ENCODE measurements at regions of chr11 and their contacts with region 1.

Region 1: GRCh38 chr11:33065445-33066178 is 26.2 kb downstream of the TCP11L1 start:
- DNase-seq: peak; percentile 66 to 72 (median 67)
- H3K4me3 ChIP-seq: no peak overlapping the region
- H3K4me3 Mint-ChIP-seq: no peak overlapping the region
- H3K27ac ChIP-seq: no peak overlapping the region
- H3K27ac Mint-ChIP-seq: peak overlapping the region in 1 of 7 donors; percentile 64
- H3K4me1 ChIP-seq: peaks cover 5% of the 10 kb centered on the region
- H3K4me1 Mint-ChIP-seq: peaks cover 15 to 30% (median 25%) of the 10 kb centered on the region in 4 donors
- H3K27me3 ChIP-seq: no peaks in the 10 kb centered on the region
- H3K27me3 Mint-ChIP-seq: no peaks in the 10 kb centered on the region

Region 2: DNA sequence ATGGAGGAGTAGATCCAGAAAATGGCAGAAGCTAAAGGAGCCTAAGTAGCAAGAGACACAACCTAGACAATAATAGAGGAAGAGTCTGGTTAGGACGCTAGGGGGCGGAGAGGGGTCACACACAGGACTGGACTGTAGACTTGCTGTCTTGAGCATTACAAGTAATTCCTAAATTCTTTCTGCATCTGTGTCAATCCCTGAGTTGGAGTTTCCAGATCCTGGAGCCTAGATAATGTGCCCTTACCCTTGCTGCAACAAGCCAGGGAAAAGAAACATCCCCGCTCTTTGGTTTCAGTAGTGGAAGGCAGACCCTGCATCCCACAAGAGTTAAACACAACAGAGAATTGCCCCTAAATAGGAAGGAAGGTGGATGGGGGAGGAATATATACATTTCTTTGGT is 256.3 kb before region 1 on chr11:
- CTCF ChIA-PET with region 1: interaction called, 8 read pairs
- POLR2A ChIA-PET with region 1: no interaction called
- intact Hi-C with region 1: loop called (anchors 2 kb)
- DNase-seq: peak in 3 of 5 donors; percentile 7 to 13 (median 13)
- H3K4me3 ChIP-seq: no peak overlapping the region
- H3K4me3 Mint-ChIP-seq: no peak overlapping the region
- H3K27ac ChIP-seq: no peak overlapping the region
- H3K27ac Mint-ChIP-seq: no peak overlapping the region
- H3K4me1 ChIP-seq: no peaks in the 10 kb centered on the region
- H3K4me1 Mint-ChIP-seq: no peaks in the 10 kb centered on the region
- H3K27me3 ChIP-seq: no peaks in the 10 kb centered on the region
- H3K27me3 Mint-ChIP-seq: no peaks in the 10 kb centered on the region

Region 3: GRCh38 chr11:32960553-32961164 is 105.0 kb before region 1 on chr11:
- CTCF ChIA-PET with region 1: interaction called, 394 read pairs
- POLR2A ChIA-PET with region 1: interaction called, 8 read pairs
- intact Hi-C with region 1: loop called (anchors 1 kb)
- DNase-seq: peak in 4 of 5 donors; percentile 40 to 57 (median 54)
- H3K4me3 ChIP-seq: no peak overlapping the region
- H3K4me3 Mint-ChIP-seq: no peak overlapping the region
- H3K27ac ChIP-seq: no peak overlapping the region
- H3K27ac Mint-ChIP-seq: no peak overlapping the region
- H3K4me1 ChIP-seq: no peaks in the 10 kb centered on the region
- H3K4me1 Mint-ChIP-seq: peaks cover 0 to under 1% (median 0%) of the 10 kb centered on the region in 4 donors
- H3K27me3 ChIP-seq: no peaks in the 10 kb centered on the region
- H3K27me3 Mint-ChIP-seq: no peaks in the 10 kb centered on the region

Region 4: DNA sequence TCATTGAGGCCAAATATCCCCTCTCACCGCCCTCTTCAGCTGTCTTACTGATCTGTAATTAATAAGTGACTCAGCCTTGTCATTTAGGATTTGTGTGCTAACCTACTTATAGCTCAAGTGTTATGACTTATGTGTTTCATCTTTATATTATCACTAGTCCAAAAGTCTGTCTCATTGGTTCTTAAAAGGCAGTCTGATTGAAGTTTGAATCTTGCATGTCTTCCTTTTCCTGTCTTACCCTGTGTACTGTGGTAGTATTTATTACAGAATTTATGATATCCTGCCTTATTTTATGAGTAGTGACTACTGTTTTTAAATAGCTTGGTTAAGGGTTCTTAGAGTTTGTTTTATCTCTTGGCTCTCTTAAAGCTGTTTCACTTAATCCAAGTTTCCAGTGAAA is 43.7 kb before region 1 on chr11:
- CTCF ChIA-PET with region 1: interaction called, 10 read pairs
- POLR2A ChIA-PET with region 1: no interaction called
- intact Hi-C with region 1: no loop called
- DNase-seq: no peak
- H3K4me3 ChIP-seq: no peak overlapping the region
- H3K4me3 Mint-ChIP-seq: no peak overlapping the region
- H3K27ac ChIP-seq: no peak overlapping the region
- H3K27ac Mint-ChIP-seq: no peak overlapping the region
- H3K4me1 ChIP-seq: peaks cover 7% of the 10 kb centered on the region
- H3K4me1 Mint-ChIP-seq: peaks cover 2 to 17% (median 7%) of the 10 kb centered on the region in 4 donors
- H3K27me3 ChIP-seq: no peaks in the 10 kb centered on the region
- H3K27me3 Mint-ChIP-seq: peaks cover 8 to 15% of the 10 kb centered on the region in 2 donors

Region 5: DNA sequence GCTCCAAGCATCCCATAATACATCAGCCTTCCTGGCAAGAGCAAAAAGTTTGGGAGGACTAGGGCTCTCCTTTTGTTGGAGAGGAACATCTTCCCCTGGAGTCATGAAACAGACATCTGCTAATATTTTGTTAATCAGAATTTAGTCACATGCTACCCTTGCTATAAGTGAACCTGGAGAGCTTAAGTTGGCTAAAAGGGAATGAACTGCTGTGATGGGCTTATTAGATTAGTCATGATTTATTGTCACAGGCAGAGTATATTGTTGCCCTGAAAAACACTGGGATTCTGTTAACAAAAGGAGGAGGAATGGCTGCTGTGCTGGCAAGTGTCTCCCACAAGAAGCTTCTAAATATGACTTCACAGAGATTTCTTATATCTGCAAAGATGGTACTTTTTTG is 10.3 kb before region 1 on chr11:
- CTCF ChIA-PET with region 1: interaction called, 20 read pairs
- POLR2A ChIA-PET with region 1: interaction called, 3 read pairs
- intact Hi-C with region 1: no loop called
- DNase-seq: no peak
- H3K4me3 ChIP-seq: no peak overlapping the region
- H3K4me3 Mint-ChIP-seq: no peak overlapping the region
- H3K27ac ChIP-seq: no peak overlapping the region
- H3K27ac Mint-ChIP-seq: peak overlapping the region in 1 of 7 donors; percentile 64
- H3K4me1 ChIP-seq: no peaks in the 10 kb centered on the region
- H3K4me1 Mint-ChIP-seq: peaks cover 0 to 3% (median 0%) of the 10 kb centered on the region in 4 donors
- H3K27me3 ChIP-seq: no peaks in the 10 kb centered on the region
- H3K27me3 Mint-ChIP-seq: no peaks in the 10 kb centered on the region

Region 6: GRCh38 chr11:33110083-33110482 is 44.5 kb after region 1 on chr11:
- CTCF ChIA-PET with region 1: no interaction called
- POLR2A ChIA-PET with region 1: no interaction called
- intact Hi-C with region 1: no loop called
- DNase-seq: no peak
- H3K4me3 ChIP-seq: no peak overlapping the region
- H3K4me3 Mint-ChIP-seq: no peak overlapping the region
- H3K27ac ChIP-seq: no peak overlapping the region
- H3K27ac Mint-ChIP-seq: no peak overlapping the region
- H3K4me1 ChIP-seq: no peaks in the 10 kb centered on the region
- H3K4me1 Mint-ChIP-seq: no peaks in the 10 kb centered on the region
- H3K27me3 ChIP-seq: no peaks in the 10 kb centered on the region
- H3K27me3 Mint-ChIP-seq: no peaks in the 10 kb centered on the region

Measured in CD4-positive, alpha-beta memory T cell (primary cell).